Transverse colon (tissue), 4 donors: ENCODE measurements at regions of chr16 and their contacts with region 1.

Region 1: DNA sequence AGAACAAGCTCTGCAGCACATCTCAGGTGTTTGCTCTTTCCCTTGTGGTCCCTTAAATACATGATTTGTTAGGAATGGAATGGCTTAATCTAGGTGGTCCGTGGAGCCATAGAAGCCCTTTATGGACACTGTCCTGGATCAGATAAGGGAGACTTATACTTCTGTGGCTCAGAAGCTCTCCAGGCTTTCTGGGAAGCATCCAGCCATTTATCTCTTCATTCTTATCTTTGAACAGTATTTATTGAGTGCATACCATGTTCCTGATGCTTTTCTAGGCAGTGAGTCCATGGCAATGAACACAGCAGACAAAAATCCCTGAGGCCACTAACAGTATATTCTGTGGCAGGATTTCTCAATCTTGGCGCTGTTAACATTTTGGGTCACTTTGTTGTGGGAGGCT is 474.5 kb upstream of the EEF2KMT start:
- DNase-seq: no peak
- H3K4me3 ChIP-seq: no peak overlapping the region
- H3K27ac ChIP-seq: no peak overlapping the region
- H3K4me1 ChIP-seq: no peaks in the 10 kb centered on the region
- H3K27me3 ChIP-seq: no peaks in the 10 kb centered on the region
- CTCF ChIP-seq: no peak
- EP300 ChIP-seq: no peak
- POLR2A ChIP-seq: no peak

Region 2: GRCh38 chr16:5598793-5599192 is 26.7 kb after region 1 on chr16:
- in situ Hi-C with region 1: no loop called
- intact Hi-C with region 1: loop called (anchors 1 kb)
- DNase-seq: no peak
- H3K4me3 ChIP-seq: no peak overlapping the region
- H3K27ac ChIP-seq: no peak overlapping the region
- H3K4me1 ChIP-seq: no peaks in the 10 kb centered on the region
- H3K27me3 ChIP-seq: no peaks in the 10 kb centered on the region
- CTCF ChIP-seq: no peak
- EP300 ChIP-seq: no peak
- POLR2A ChIP-seq: no peak